ENCODE measurements at regions of chr15 and their contacts with region 1.

Region 1: GRCh38 chr15:39756806-39757522 is 25.7 kb downstream of the FSIP1 start:
- DNase-seq: peak in 3 of 7 donors; percentile 25 to 38 (median 34)
- H3K4me3 ChIP-seq: no peak overlapping the region
- H3K27ac ChIP-seq: no peak overlapping the region
- H3K4me1 ChIP-seq: no peaks in the 10 kb centered on the region
- H3K27me3 ChIP-seq: no peaks in the 10 kb centered on the region
- CTCF ChIP-seq: peak; percentile 54 to 93 (median 64)
- POLR2A ChIP-seq: no peak

Region 2: DNA sequence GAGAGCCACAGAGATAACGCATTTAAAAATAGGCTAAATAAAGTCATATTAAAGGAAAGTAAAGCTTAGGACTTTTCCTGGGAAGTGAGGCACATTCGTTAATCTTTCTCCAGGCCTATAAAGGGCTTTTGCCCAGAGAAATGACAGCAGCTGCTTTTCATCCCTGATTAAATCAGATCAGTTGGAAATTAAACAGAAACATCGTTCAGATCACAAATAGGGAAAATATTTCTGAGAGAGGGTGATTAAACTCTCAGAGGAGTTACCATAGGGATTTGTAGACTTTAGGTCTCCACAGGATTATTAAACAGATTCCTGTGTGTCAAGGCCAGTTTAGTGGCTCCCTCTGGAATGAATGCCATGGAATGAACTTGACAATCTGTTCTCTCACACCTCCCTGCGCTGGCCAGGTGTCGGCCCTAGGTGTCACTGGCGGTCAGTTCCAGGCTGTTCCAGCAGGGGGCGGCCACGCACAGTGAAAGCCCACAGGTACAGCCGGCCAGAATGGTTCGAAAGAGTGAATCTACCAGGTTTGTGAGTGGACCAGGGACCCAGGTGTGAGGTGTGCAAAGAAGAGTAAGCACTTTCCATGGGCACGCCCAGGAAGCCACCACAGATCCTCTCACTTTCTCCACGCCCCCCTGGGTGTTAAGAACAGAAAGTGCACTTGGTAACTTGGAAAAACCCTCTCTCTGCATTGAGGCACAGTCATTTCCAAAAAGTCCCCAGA is 939.4 kb before region 1 on chr15:
- intact Hi-C with region 1: loop called in 1 of 2 experiments (anchors 5 kb)
- DNase-seq: peak; percentile 66 to 93 (median 79)
- H3K4me3 ChIP-seq: no peak overlapping the region
- H3K27ac ChIP-seq: no peak overlapping the region
- H3K4me1 ChIP-seq: no peaks in the 10 kb centered on the region
- H3K27me3 ChIP-seq: no peaks in the 10 kb centered on the region
- CTCF ChIP-seq: peak; percentile 93 to 99 (median 96)
- POLR2A ChIP-seq: no peak

Region 3: GRCh38 chr15:39504808-39505207 is 252.2 kb before region 1 on chr15:
- intact Hi-C with region 1: no loop called
- DNase-seq: no peak
- H3K4me3 ChIP-seq: no peak overlapping the region
- H3K27ac ChIP-seq: no peak overlapping the region
- H3K4me1 ChIP-seq: no peaks in the 10 kb centered on the region
- H3K27me3 ChIP-seq: no peaks in the 10 kb centered on the region
- CTCF ChIP-seq: no peak
- POLR2A ChIP-seq: no peak

Region 4: DNA sequence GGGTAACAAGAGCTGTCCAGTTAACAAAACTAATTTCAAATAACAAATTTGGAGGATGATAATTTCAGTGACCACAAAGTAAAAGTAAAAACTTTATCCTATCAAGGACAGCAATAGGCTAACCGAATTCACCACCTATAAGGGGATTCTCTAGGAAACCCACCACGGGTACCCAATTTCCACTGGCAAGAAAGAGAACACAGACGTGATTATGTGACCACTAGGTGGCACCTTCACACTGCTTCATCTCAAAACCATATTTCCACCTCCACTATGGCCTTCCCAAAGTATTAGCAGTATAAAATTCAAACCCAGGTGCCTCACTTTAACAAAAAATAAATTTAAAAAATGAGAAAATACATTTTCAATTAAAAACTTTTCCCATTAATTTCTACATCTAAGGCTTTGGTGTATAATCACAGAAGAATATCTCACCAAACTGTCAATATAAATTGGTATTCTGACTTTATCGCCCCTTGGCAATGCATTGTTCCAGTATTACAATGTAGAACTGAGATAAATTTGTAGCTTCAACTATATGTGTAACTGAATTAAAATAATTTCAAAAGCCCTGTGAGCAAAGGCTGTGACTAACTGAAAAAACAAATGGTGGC is 70.9 kb before region 1 on chr15:
- intact Hi-C with region 1: loop called in 1 of 2 experiments (anchors 5 kb)
- DNase-seq: peak; percentile 20 to 58 (median 33)
- H3K4me3 ChIP-seq: no peak overlapping the region
- H3K27ac ChIP-seq: no peak overlapping the region
- H3K4me1 ChIP-seq: no peaks in the 10 kb centered on the region
- H3K27me3 ChIP-seq: no peaks in the 10 kb centered on the region
- CTCF ChIP-seq: peak; percentile 58 to 93 (median 64)
- POLR2A ChIP-seq: no peak

Measured in adrenal gland (tissue), 19 donors.